Right ventricle myocardium inferior (tissue), 1 donor: ENCODE measurements at regions of chr4 and their contacts with region 1.

Region 1: GRCh38 chr4:91502365-91502764 is 801.4 kb upstream of the GRID2 start:
- DNase-seq: no peak
- ATAC-seq: no peak

Region 2: GRCh38 chr4:91113130-91113706 is 389.1 kb before region 1 on chr4:
- intact Hi-C with region 1: loop called (anchors 5 kb)
- DNase-seq: no peak
- ATAC-seq: no peak